ENCODE measurements at regions of chr7 and their contacts with region 1.

Region 1: DNA sequence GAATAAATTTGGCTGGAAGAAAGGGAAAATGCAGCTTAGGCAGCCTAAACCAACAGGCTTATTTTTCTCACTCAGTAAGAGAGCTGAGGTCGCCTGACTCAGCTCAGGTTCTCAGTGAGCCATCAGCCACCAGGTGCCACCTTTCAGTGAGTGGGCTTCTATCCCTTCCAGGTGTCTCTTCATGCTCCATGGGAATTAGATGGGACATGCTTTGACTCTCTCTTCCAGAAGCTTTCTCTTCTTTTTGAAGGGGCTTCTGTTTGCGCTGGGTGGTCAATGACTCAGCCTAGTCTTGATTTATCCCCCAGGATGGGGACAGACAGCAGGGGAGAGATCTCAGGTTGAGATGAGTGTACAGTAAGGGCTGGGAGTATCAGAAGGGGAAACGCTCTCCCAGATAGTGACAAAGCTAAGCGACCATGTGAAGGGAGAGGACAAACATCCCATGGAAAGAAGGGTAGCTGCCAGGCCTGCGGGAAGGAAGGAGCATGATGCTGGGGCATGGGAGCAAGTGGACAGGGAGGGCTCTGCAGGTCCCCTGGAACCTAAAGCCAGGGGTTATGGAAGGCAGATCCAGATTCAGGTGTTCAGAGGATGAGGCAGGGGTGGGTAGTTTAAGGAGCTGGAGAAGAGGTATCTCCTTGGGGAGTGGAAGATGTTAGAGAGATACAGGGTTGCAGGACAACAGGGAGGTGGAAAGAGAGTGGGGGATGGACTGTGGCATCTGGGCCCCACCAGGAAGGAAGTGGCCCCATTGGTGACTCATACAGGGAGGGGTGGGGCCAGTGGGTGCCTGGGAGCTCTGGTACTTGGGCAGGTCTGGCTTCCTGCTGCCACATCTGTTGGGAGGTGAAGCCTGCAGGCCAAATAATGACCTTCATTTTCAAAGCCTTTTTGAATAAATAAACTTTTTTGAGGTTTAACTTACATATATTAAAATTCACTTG is 32.5 kb downstream of the OGDH start:
- DNase-seq: peak; percentile 93
- ATAC-seq: peak; percentile 80
- H3K4me3 Mint-ChIP-seq: peak overlapping the region; percentile 71
- H3K27ac Mint-ChIP-seq: peak overlapping the region; percentile 100
- H3K4me1 Mint-ChIP-seq: peaks cover 68% of the 10 kb centered on the region
- H3K27me3 Mint-ChIP-seq: no peaks in the 10 kb centered on the region
- CTCF ChIP-seq: no peak

Region 2: DNA sequence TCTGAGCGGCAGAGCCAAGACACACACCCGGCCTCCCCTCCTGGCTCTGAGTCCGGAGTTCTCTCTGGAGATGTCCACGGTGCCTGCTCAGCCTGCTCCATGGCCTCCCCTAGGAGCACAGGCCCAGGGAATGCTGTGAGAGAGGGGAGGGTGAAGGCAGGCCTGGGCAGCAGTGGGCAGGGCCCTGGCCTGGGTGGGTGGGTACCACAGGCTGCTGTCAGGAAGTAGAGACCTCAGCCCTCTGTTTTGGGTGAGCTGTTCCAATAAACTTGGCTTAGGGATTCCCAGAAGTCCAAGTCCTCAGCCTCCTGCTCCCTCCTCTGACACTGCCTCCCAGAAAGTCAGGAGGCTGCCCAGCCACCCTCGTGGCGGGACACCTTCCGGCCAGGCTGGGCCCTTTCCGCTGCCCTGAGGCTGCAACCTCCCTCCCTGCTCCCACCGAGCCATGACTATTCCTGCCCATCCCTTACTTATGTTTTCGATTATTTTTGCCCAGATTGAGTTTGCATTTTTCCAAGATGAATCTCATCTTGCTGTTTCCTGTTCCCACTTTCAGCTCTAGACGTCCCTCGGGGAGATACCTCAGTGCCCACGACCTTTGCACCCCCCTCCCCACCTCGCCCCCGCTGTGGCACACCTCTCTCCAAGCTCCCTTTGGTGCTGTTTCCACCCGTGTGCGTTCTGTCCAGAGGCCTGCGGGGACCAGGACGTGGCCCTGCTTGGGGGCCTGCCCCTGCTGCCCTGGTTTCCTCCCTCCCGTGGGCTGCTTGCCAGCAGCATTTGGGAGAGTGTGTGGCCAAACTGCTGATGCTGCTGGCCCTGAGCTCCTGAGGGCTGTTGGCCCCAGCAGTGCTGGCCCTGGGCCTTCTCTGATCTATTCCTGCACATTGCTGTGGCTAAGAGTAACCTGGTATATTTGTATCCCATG is 550.7 kb before region 1 on chr7:
- CTCF ChIA-PET with region 1: no interaction called
- POLR2A ChIA-PET with region 1: no interaction called
- intact Hi-C with region 1: no loop called
- DNase-seq: no peak
- ATAC-seq: no peak
- H3K4me3 Mint-ChIP-seq: no peak overlapping the region
- H3K27ac Mint-ChIP-seq: no peak overlapping the region
- H3K4me1 Mint-ChIP-seq: peaks cover 6% of the 10 kb centered on the region
- H3K27me3 Mint-ChIP-seq: no peaks in the 10 kb centered on the region
- CTCF ChIP-seq: no peak

Region 3: DNA sequence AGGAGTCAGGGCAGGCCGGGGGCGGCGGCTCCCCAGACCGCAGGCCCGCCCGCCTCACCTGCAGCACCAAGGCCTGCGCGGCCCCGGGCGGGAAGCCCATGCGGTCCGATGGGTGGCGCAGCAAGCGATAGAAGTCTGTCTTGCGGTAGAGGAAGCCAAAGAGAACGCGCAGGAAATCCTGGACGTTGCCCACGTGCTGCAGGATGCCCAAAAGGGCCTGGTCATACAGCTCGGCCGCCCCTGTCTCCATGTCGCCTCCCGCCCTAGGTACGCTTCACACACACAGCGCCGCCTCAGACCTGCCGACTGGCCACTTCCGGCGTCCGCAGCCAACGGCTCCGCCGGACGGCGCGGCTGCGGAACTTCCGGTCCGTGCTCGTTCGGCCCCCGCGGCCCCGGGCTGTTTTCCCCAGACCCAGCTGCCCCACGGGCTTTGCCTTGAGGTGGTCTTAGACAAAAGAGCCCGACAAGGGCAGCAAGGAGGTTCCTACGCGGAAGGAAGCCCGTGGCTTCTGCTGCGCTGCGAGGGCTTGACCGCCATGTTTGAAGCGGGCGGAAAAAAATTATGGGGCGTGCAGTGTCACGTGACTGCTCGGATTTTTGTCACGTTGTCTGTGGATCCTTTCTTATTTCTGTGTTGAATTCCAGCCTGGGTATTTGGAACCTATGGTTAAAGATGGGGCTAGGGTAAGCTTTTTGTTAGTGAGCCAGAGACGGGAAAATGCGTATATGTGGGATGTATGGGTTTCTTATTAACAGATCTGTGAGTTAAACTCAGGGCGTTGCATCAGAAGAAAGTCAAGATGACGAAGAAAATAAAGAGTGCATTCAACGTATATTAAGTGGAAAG is 148.3 kb before region 1 on chr7 and contains the start of gene NUDCD3:
- CTCF ChIA-PET with region 1: no interaction called
- POLR2A ChIA-PET with region 1: no interaction called
- intact Hi-C with region 1: loop called (anchors 5 kb)
- DNase-seq: peak; percentile 86
- ATAC-seq: peak; percentile 78
- H3K4me3 Mint-ChIP-seq: peak within 1 kb of the TSS; percentile 92
- H3K27ac Mint-ChIP-seq: peak within 1 kb of the TSS; percentile 97
- H3K4me1 Mint-ChIP-seq: peaks cover 40% of the 10 kb centered on the region
- H3K27me3 Mint-ChIP-seq: peaks cover 2% of the 10 kb centered on the region
- CTCF ChIP-seq: no peak
- total RNA-seq, gene NUDCD3: 102 to 107 TPM

Region 4: GRCh38 chr7:44555397-44555796 is 83.5 kb before region 1 on chr7:
- CTCF ChIA-PET with region 1: no interaction called
- POLR2A ChIA-PET with region 1: no interaction called
- intact Hi-C with region 1: no loop called
- DNase-seq: no peak
- ATAC-seq: no peak
- H3K4me3 Mint-ChIP-seq: no peak overlapping the region
- H3K27ac Mint-ChIP-seq: no peak overlapping the region
- H3K4me1 Mint-ChIP-seq: no peaks in the 10 kb centered on the region
- H3K27me3 Mint-ChIP-seq: no peaks in the 10 kb centered on the region
- CTCF ChIP-seq: no peak

Region 5: DNA sequence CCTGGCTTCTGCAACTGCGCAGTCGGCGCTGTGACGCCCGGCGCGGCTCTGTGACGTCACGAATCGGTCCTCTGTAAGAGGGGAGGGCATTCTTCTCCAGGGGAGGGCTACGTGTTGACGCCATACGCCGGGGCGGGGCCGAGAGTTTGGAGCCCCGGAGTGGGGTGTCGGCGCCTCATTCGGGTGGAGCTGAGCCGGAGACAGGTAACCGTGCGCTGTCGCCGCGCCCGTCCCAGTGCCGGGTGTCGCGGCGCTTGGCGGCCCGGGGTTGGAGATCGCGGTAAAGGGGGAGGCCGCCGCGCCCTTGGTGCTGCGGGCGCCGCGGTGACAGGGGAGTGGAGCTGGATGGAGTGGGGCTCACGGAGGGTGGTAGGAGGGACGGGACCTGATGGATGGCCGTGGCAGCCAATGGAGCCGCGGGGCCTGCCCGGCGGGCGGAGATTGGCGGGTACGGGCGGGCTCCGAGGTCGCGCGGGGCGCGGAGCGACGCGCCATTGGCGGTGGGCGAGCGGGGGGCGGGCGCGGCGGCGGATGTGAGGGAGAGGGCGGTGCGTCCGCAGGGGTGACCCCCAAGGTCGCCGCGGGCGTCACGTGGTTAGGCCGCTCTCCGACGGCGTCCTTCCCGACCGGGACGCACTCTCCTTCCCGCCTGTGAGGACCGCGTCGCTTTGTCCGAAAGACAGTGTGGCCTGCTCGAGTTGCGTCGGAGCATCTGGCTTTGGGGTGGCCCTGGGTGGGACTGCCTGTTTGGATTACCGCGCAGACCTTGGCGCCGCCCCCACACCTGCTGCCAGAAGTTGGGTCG is 32.2 kb before region 1 on chr7 and contains the start of gene OGDH:
- CTCF ChIA-PET with region 1: interaction called, 13 read pairs
- POLR2A ChIA-PET with region 1: interaction called, 52 read pairs
- intact Hi-C with region 1: no loop called
- DNase-seq: peak; percentile 100
- ATAC-seq: peak; percentile 97
- H3K4me3 Mint-ChIP-seq: peak within 1 kb of the TSS; percentile 92
- H3K27ac Mint-ChIP-seq: peak within 1 kb of the TSS; percentile 97
- H3K4me1 Mint-ChIP-seq: peaks cover 26% of the 10 kb centered on the region
- H3K27me3 Mint-ChIP-seq: no peaks in the 10 kb centered on the region
- CTCF ChIP-seq: no peak
- total RNA-seq, gene OGDH: 78.6 to 85.6 TPM

Region 6: GRCh38 chr7:44615149-44615611 is 23.7 kb before region 1 on chr7:
- CTCF ChIA-PET with region 1: interaction called, 15 read pairs
- POLR2A ChIA-PET with region 1: interaction called, 19 read pairs
- intact Hi-C with region 1: no loop called
- DNase-seq: peak; percentile 34
- ATAC-seq: no peak
- H3K4me3 Mint-ChIP-seq: no peak overlapping the region
- H3K27ac Mint-ChIP-seq: peak overlapping the region; percentile 64
- H3K4me1 Mint-ChIP-seq: peaks cover 60% of the 10 kb centered on the region
- H3K27me3 Mint-ChIP-seq: no peaks in the 10 kb centered on the region
- CTCF ChIP-seq: no peak

Region 7: DNA sequence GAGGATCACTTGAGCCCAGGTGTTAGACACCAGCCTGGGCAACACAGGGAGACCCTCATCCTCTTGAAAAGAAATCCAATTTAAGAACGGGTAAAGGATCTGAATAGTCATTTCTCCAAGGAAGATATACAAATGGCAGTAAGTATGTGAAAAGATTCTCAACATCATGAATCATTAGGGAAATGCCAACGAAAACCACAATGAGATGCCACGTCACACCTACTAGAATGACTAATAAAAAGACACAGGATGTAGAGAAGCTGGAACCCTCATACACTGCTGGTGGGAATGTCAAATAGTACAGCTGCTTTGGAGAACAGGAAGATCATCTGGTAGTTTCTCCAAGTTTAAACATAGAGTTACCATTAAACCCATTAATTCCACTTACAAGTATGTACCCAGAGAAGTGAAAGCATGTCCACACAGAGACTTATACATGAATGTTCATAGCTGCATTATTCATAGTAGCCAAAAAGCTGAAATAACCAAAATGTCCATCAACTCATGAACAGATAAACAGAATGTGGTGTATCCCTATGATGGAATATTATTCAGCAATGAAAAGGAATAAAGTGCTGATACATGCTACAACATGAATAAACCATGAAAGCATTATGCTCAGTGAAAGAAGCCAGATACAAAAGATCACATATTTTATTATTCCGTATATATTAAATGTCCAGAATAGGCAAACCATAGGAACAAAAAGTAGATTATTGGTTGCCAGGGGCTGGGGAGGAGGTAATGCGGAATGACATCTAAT is 96.7 kb after region 1 on chr7:
- CTCF ChIA-PET with region 1: no interaction called
- POLR2A ChIA-PET with region 1: interaction called, 4 read pairs
- intact Hi-C with region 1: loop called (anchors 5 kb)
- DNase-seq: peak; percentile 80
- ATAC-seq: peak; percentile 86
- H3K4me3 Mint-ChIP-seq: no peak overlapping the region
- H3K27ac Mint-ChIP-seq: peak overlapping the region; percentile 83
- H3K4me1 Mint-ChIP-seq: peaks cover 12% of the 10 kb centered on the region
- H3K27me3 Mint-ChIP-seq: no peaks in the 10 kb centered on the region
- CTCF ChIP-seq: no peak

Region 8: DNA sequence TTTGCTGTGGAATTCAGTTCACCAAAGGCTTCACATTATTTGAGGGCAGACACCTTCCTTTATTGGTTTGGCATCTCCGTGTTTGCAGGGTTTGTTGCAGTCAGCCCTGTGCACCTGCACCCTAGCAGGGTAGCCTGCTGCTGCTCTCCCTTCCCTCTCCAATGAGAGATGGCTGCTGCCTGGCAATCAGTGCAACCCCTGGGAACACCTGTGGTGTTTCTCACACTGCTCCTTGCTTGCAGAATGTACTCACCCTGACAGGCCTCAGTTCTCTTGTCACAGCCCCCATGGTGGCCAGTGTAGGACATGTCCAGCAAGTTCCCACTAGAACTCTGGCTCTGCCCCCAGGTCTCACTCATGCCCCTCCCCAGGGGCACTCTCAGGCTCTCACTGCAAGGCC is 145.5 kb after region 1 on chr7:
- CTCF ChIA-PET with region 1: no interaction called
- POLR2A ChIA-PET with region 1: no interaction called
- intact Hi-C with region 1: no loop called
- DNase-seq: no peak
- ATAC-seq: no peak
- H3K4me3 Mint-ChIP-seq: no peak overlapping the region
- H3K27ac Mint-ChIP-seq: no peak overlapping the region
- H3K4me1 Mint-ChIP-seq: no peaks in the 10 kb centered on the region
- H3K27me3 Mint-ChIP-seq: no peaks in the 10 kb centered on the region
- CTCF ChIP-seq: no peak